ENCODE measurements at regions of chr5 and their contacts with region 1.

Region 1: DNA sequence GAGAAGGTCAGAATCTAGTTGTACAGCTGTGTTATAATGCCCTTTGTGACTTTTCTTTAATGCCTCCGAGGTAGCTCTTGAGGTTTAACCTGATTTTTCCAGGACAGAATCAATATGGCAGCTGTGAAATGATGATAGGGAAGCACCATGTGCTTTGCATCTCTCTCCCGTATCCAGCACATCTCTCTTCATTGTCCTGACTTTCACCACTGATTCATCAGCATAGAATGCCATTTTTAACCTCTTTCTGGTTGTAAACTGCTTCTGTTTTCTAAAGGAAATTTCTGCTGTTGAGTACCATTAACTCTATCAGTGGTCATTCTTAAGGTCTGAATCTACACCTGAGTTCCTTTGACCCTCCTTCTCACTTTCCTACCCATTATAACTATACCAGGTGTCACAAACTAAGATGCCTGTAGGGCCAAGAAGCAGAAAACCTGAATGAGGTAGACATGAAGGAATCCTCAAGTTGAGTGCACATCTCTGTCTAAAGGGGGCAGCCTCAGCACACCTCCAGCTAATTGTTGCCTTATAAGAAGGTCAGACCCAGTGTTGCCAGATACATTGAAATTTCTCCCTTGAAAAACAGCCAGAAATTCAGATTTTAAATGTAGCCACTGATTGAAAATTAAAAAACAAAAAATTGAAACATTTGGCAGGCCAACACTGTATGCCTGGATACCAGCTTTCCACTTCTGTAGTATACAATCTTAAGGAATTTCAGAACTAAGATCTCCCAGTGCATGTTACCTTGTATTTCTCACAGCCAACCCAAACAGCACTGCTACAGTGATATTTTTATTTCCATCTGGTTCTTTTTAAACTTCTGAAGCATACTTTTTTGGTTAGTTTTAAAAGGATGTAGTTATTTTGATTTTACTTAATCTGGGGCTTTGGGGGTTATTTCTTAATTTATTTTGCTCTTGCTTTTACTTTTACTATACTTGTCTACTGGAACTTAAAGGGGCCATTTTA is 35.8 kb upstream of the TLX3 start:
- DNase-seq: peak; percentile 12
- H3K4me3 ChIP-seq: no peak overlapping the region
- H3K27ac ChIP-seq: no peak overlapping the region
- H3K4me1 ChIP-seq: no peaks in the 10 kb centered on the region
- H3K27me3 ChIP-seq: no peaks in the 10 kb centered on the region
- CTCF ChIP-seq: peak in 1 of 2 donors; percentile 26
- POLR2A ChIP-seq: no peak

Region 2: GRCh38 chr5:170338933-170339779 is 934.1 kb before region 1 on chr5:
- CTCF ChIA-PET with region 1: no interaction called
- POLR2A ChIA-PET with region 1: no interaction called
- dilution Hi-C with region 1: no loop called
- intact Hi-C with region 1: no loop called
- DNase-seq: no peak
- H3K4me3 ChIP-seq: no peak overlapping the region
- H3K27ac ChIP-seq: no peak overlapping the region
- H3K4me1 ChIP-seq: no peaks in the 10 kb centered on the region
- H3K27me3 ChIP-seq: peaks cover 0 to 2% of the 10 kb centered on the region in 2 experiments
- CTCF ChIP-seq: no peak
- POLR2A ChIP-seq: no peak

Region 3: GRCh38 chr5:171330021-171330420 is 56.7 kb after region 1 on chr5:
- CTCF ChIA-PET with region 1: no interaction called
- POLR2A ChIA-PET with region 1: no interaction called
- dilution Hi-C with region 1: no loop called
- intact Hi-C with region 1: no loop called
- DNase-seq: no peak
- H3K4me3 ChIP-seq: no peak overlapping the region
- H3K27ac ChIP-seq: no peak overlapping the region
- H3K4me1 ChIP-seq: no peaks in the 10 kb centered on the region
- H3K27me3 ChIP-seq: peaks cover 11 to 18% of the 10 kb centered on the region in 2 experiments
- CTCF ChIP-seq: no peak
- POLR2A ChIP-seq: no peak

Region 4: GRCh38 chr5:171342362-171343111 is 69.3 kb after region 1 on chr5:
- CTCF ChIA-PET with region 1: interaction called, 17 read pairs
- POLR2A ChIA-PET with region 1: no interaction called
- dilution Hi-C with region 1: no loop called
- intact Hi-C with region 1: loop called (anchors 1 kb)
- DNase-seq: peak; percentile 64
- H3K4me3 ChIP-seq: no peak overlapping the region
- H3K27ac ChIP-seq: no peak overlapping the region
- H3K4me1 ChIP-seq: no peaks in the 10 kb centered on the region
- H3K27me3 ChIP-seq: no peaks in the 10 kb centered on the region
- CTCF ChIP-seq: peak; percentile 57 to 61
- POLR2A ChIP-seq: no peak

Measured in endothelial cell of umbilical vein (primary cell).